Esophagus squamous epithelium (tissue), 5 donors: ENCODE measurements at regions of chr19 and their contacts with region 1.

Region 1: GRCh38 chr19:50779504-50780457 is 9.5 kb downstream of the GPR32 start:
- DNase-seq: no peak
- H3K4me3 ChIP-seq: no peak overlapping the region
- H3K27ac ChIP-seq: no peak overlapping the region
- H3K4me1 ChIP-seq: peaks cover 0 to 9% (median 0%) of the 10 kb centered on the region in 3 donors
- H3K27me3 ChIP-seq: peaks cover 0 to 86% (median 8%) of the 10 kb centered on the region in 4 donors
- CTCF ChIP-seq: no peak
- POLR2A ChIP-seq: no peak

Region 2: DNA sequence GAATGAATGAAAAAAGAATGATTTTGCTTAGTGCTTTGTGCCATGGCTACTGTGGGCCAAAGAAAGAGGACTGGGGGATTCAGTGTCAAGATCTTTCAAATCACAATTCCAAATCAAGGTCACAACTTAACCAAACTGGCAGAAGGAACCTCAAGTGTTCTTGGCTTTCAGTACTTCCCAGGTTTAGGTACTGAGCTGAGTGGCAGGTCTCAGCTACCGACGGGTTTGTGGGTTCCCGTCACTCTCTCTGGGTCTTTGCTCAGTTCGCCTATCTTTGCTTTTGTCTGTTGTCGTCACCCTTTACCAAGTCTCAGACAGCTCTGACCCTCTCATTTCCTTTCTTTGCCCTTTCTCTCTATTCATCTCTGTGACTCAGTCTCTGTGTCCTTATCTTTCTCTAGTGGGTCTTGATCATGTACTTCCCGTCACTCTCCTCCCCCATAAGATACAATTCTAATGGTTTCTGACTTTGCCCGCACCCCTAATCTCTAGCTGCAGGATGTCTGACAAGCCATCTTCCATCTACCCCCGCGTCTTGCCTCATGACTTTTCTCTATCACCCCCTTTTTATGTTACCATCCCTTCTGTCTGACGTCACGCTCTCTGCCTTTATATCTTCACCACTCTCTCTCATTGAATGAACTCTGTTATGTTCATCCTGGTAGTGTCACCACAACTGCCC is 178.2 kb before region 1 on chr19:
- intact Hi-C with region 1: loop called (anchors 5 kb)
- DNase-seq: no peak
- H3K4me3 ChIP-seq: no peak overlapping the region
- H3K27ac ChIP-seq: no peak overlapping the region
- H3K4me1 ChIP-seq: peaks cover 0 to 5% (median 0%) of the 10 kb centered on the region in 3 donors
- H3K27me3 ChIP-seq: peaks cover 0 to 63% (median 0%) of the 10 kb centered on the region in 4 donors
- CTCF ChIP-seq: no peak
- POLR2A ChIP-seq: no peak

Region 3: GRCh38 chr19:50922317-50922853 is 142.6 kb after region 1 on chr19:
- intact Hi-C with region 1: no loop called
- DNase-seq: no peak
- H3K4me3 ChIP-seq: no peak overlapping the region
- H3K27ac ChIP-seq: no peak overlapping the region
- H3K4me1 ChIP-seq: peaks cover 0 to 6% (median 6%) of the 10 kb centered on the region in 3 donors
- H3K27me3 ChIP-seq: peaks cover 0 to 46% (median 0%) of the 10 kb centered on the region in 4 donors
- CTCF ChIP-seq: peak; percentile 82 to 92 (median 84)
- POLR2A ChIP-seq: no peak